ENCODE measurements at regions of chr13 and their contacts with region 1.

Region 1: DNA sequence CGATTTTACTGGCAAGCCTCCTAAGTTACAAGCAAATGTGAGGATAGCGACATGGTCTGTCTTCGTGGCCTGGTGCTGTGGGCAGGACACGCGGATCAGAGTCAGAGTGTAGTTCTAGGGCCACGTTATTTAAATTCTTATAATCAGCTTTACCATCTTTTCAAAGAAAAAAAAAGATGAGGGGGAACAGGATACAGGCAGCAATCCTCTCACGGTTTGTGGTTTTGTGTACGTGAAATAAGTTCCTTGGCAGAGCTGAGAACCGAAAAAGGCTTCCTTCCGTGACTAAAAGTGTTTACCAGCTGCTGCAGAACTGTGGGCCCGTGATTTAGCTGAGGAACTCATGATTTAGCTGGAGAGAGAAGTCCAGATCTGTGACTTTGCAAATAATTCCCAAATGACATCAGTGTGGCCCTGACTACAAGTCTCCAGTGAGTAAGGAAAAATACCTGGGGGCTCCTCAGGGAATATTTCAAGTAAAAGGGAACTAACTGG is 27.2 kb downstream of the RCBTB2 start:
- DNase-seq: peak; percentile 82 to 91 (median 91)
- H3K4me3 ChIP-seq: peak overlapping the region in 1 of 3 experiments; percentile 32
- H3K4me3 Mint-ChIP-seq: peak overlapping the region; percentile 56 to 63
- H3K27ac ChIP-seq: peak overlapping the region; percentile 93 to 97
- H3K27ac Mint-ChIP-seq: peak overlapping the region; percentile 87 to 98 (median 95)
- H3K4me1 ChIP-seq: peaks cover 64 to 79% of the 10 kb centered on the region in 2 donors
- H3K4me1 Mint-ChIP-seq: peaks cover 79% of the 10 kb centered on the region
- H3K27me3 ChIP-seq: no peaks in the 10 kb centered on the region
- H3K27me3 Mint-ChIP-seq: peaks cover 0 to 3% (median 1%) of the 10 kb centered on the region in 3 donors
- CTCF ChIP-seq: no peak

Region 2: DNA sequence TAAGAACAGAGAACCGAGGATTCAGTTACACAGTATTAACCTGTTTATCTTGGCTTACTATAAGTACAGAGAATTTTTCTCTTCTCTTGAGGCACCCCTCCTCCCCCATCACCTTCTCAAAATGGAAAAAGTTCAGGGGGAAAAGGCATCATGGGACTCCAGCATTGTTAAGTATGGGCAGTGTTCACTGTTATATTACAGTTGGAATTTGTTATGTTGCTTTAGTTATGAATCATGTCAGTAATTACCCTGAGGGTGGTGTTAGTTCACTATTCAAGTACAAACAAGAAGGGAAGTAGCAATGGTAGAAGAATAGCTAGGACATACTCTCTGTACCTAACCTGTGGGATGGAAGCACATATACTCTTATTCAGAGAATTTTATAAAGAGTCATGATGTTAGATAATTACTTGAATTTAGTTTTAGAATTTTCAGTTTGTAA is 104.8 kb before region 1 on chr13:
- intact Hi-C with region 1: loop called (anchors 10 kb)
- DNase-seq: peak; percentile 15 to 53 (median 43)
- H3K4me3 ChIP-seq: no peak overlapping the region
- H3K4me3 Mint-ChIP-seq: peak overlapping the region in 1 of 2 donors; percentile 13
- H3K27ac ChIP-seq: peak overlapping the region in 1 of 2 donors; percentile 69
- H3K27ac Mint-ChIP-seq: peak overlapping the region in 6 of 7 donors; percentile 55 to 93 (median 85)
- H3K4me1 ChIP-seq: peaks cover 33 to 50% of the 10 kb centered on the region in 2 donors
- H3K4me1 Mint-ChIP-seq: peaks cover 43% of the 10 kb centered on the region
- H3K27me3 ChIP-seq: no peaks in the 10 kb centered on the region
- H3K27me3 Mint-ChIP-seq: no peaks in the 10 kb centered on the region
- CTCF ChIP-seq: peak; percentile 22

Region 3: GRCh38 chr13:48448959-48449614 is 56.6 kb before region 1 on chr13:
- intact Hi-C with region 1: loop called in 1 of 2 experiments (anchors 10 kb)
- DNase-seq: peak; percentile 52 to 90 (median 68)
- H3K4me3 ChIP-seq: peak overlapping the region; percentile 25 to 70 (median 47)
- H3K4me3 Mint-ChIP-seq: peak overlapping the region; percentile 63 to 86
- H3K27ac ChIP-seq: peak overlapping the region; percentile 7 to 84
- H3K27ac Mint-ChIP-seq: peak overlapping the region; percentile 80 to 92 (median 87)
- H3K4me1 ChIP-seq: peaks cover 26 to 41% of the 10 kb centered on the region in 2 donors
- H3K4me1 Mint-ChIP-seq: peaks cover 23% of the 10 kb centered on the region
- H3K27me3 ChIP-seq: no peaks in the 10 kb centered on the region
- H3K27me3 Mint-ChIP-seq: no peaks in the 10 kb centered on the region
- CTCF ChIP-seq: no peak

Region 4: GRCh38 chr13:48975856-48976575 is 470.4 kb after region 1 on chr13 and contains the start of gene FNDC3A:
- intact Hi-C with region 1: loop called in 1 of 2 experiments (anchors 5 kb)
- DNase-seq: peak; percentile 80 to 88 (median 82)
- H3K4me3 ChIP-seq: peak within 1 kb of the TSS; percentile 80 to 97 (median 92)
- H3K4me3 Mint-ChIP-seq: peak within 1 kb of the TSS; percentile 95 to 96
- H3K27ac ChIP-seq: peak within 1 kb of the TSS; percentile 96 to 99
- H3K27ac Mint-ChIP-seq: peak within 1 kb of the TSS; percentile 96 to 99 (median 99)
- H3K4me1 ChIP-seq: peaks cover 40 to 51% of the 10 kb centered on the region in 2 donors
- H3K4me1 Mint-ChIP-seq: peaks cover 34% of the 10 kb centered on the region
- H3K27me3 ChIP-seq: no peaks in the 10 kb centered on the region
- H3K27me3 Mint-ChIP-seq: no peaks in the 10 kb centered on the region
- CTCF ChIP-seq: no peak
- polyA plus RNA-seq, gene FNDC3A: 8.3 to 27.0 (median 12.0) TPM